ENCODE measurements at regions of chr18 and their contacts with region 1.

Region 1: GRCh38 chr18:39994498-39994897 is 1960.5 kb upstream of the PIK3C3 start:
- DNase-seq: no peak
- ATAC-seq: no peak
- H3K4me3 ChIP-seq: no peak overlapping the region
- H3K27ac ChIP-seq: no peak overlapping the region
- H3K4me1 ChIP-seq: no peaks in the 10 kb centered on the region
- H3K27me3 ChIP-seq: no peaks in the 10 kb centered on the region
- CTCF ChIP-seq: no peak

Region 2: GRCh38 chr18:39946623-39947061 is 47.9 kb before region 1 on chr18:
- intact Hi-C with region 1: no loop called
- DNase-seq: no peak
- ATAC-seq: peak in 2 of 4 donors; percentile 43 to 65
- H3K4me3 ChIP-seq: no peak overlapping the region
- H3K27ac ChIP-seq: no peak overlapping the region
- H3K4me1 ChIP-seq: no peaks in the 10 kb centered on the region
- H3K27me3 ChIP-seq: no peaks in the 10 kb centered on the region
- CTCF ChIP-seq: no peak

Region 3: DNA sequence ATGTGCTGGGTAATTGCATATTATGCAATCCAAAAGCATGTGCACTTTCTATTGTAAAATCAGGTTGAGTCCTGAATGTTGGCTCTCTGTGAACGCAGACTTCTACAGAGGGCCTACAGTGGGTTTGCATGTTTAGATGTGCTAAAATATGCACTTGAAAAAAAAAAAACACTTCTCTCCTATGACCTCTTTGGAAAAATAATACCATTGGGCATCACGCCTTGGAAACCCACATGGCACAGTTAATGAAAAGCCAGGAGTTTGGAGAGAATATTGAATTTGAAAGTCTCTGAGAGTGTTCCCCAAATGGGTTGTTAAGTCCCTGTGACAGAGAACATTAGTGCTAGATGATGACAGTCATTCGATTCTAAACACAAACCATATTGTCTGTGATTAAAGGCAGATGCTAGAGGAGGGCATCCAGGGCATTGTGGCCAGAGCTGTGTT is 1250.1 kb after region 1 on chr18:
- intact Hi-C with region 1: loop called in 1 of 2 experiments (anchors 5 kb)
- DNase-seq: no peak
- ATAC-seq: no peak
- H3K4me3 ChIP-seq: no peak overlapping the region
- H3K27ac ChIP-seq: no peak overlapping the region
- H3K4me1 ChIP-seq: no peaks in the 10 kb centered on the region
- H3K27me3 ChIP-seq: no peaks in the 10 kb centered on the region
- CTCF ChIP-seq: no peak

Measured in psoas muscle (tissue), 8 donors.